ENCODE measurements at regions of chr9 and their contacts with region 1.

Region 1: GRCh38 chr9:121213136-121213806 is 11.6 kb upstream of the RAB14 start:
- DNase-seq: peak; percentile 83
- ATAC-seq: peak; percentile 79
- H3K4me3 Mint-ChIP-seq: no peak overlapping the region
- H3K27ac Mint-ChIP-seq: no peak overlapping the region
- H3K4me1 Mint-ChIP-seq: peaks cover 4% of the 10 kb centered on the region
- H3K27me3 Mint-ChIP-seq: no peaks in the 10 kb centered on the region
- CTCF ChIP-seq: peak; percentile 92

Region 2: DNA sequence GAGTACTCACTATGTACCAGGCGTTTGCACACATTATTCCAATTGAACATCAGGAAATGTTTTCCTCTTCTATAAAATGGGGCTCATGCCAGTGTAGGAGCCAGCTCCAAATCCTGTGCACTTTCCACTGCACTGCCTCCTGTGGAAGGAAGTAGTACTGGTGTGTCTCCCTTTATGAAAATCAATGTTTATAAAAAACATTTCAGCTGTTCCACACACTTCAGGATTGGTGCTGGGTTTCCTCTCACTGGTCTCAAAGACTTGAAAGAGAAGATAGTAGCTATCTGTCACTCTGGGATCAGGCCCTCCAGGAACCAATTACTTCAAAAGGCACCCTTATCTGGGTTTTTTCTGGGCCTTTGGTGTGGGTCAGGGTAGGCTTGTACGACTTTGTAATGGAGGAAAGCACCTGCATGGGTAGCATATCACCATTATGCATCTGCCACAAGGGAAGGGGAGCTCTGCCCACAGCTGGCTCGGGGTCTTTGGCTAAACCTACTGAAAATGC is 44.1 kb before region 1 on chr9:
- CTCF ChIA-PET with region 1: interaction called, 10 read pairs
- POLR2A ChIA-PET with region 1: no interaction called
- intact Hi-C with region 1: no loop called
- DNase-seq: peak; percentile 25
- ATAC-seq: peak; percentile 76
- H3K4me3 Mint-ChIP-seq: no peak overlapping the region
- H3K27ac Mint-ChIP-seq: peak overlapping the region; percentile 56
- H3K4me1 Mint-ChIP-seq: peaks cover 20% of the 10 kb centered on the region
- H3K27me3 Mint-ChIP-seq: no peaks in the 10 kb centered on the region
- CTCF ChIP-seq: peak; percentile 44

Region 3: DNA sequence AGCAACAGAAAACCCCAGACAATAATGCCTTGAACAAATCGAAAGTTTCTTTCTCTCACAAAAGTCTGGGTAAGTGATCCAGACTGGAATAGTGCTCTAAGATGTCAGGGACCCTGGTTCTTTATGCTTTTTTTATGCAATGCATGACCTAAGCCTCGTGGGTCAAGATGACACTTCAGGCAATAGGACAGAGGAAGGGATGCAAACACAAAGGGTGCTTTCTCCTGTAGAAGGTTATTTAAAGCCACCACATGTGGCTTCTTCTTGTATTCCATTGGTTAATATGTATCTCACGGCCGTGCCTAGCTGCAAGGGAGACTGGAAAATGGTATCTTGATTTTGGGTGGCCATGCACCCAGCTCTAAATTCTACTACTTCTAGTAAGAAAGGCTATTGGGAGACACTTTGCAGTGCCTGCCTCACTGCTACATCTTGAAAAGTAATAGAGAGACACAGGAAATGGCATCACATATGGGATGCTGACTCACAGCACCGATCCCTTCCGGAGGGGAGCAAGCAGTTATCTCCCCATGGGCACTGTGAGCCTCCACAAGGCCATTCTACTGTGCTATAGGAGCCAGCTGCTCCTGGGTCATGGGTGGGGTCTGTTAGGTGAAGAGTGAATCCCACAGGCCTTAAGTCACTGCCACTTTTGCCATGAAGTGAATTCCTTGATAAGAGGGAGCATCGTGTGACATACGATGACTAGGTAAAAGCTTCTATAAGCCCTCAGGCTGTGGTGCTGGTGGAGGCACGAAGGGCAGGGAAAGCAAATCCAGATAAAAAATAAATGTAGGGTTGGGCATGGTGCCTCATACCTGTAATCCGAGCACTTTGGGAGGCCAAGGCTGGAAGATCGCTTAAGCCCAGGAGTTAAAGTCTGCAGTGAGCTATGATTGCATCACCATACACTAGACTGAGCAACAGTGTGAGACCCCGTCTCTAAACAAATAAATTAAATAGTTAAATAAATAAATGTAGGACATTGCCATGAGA is 20.9 kb after region 1 on chr9:
- CTCF ChIA-PET with region 1: interaction called, 23 read pairs
- POLR2A ChIA-PET with region 1: no interaction called
- intact Hi-C with region 1: no loop called
- DNase-seq: no peak
- ATAC-seq: no peak
- H3K4me3 Mint-ChIP-seq: no peak overlapping the region
- H3K27ac Mint-ChIP-seq: no peak overlapping the region
- H3K4me1 Mint-ChIP-seq: no peaks in the 10 kb centered on the region
- H3K27me3 Mint-ChIP-seq: no peaks in the 10 kb centered on the region
- CTCF ChIP-seq: no peak

Region 4: GRCh38 chr9:121261107-121261460 is 47.8 kb after region 1 on chr9:
- CTCF ChIA-PET with region 1: interaction called, 11 read pairs
- POLR2A ChIA-PET with region 1: no interaction called
- intact Hi-C with region 1: no loop called
- DNase-seq: no peak
- ATAC-seq: no peak
- H3K4me3 Mint-ChIP-seq: no peak overlapping the region
- H3K27ac Mint-ChIP-seq: no peak overlapping the region
- H3K4me1 Mint-ChIP-seq: no peaks in the 10 kb centered on the region
- H3K27me3 Mint-ChIP-seq: peaks cover 2% of the 10 kb centered on the region
- CTCF ChIP-seq: no peak

Region 5: DNA sequence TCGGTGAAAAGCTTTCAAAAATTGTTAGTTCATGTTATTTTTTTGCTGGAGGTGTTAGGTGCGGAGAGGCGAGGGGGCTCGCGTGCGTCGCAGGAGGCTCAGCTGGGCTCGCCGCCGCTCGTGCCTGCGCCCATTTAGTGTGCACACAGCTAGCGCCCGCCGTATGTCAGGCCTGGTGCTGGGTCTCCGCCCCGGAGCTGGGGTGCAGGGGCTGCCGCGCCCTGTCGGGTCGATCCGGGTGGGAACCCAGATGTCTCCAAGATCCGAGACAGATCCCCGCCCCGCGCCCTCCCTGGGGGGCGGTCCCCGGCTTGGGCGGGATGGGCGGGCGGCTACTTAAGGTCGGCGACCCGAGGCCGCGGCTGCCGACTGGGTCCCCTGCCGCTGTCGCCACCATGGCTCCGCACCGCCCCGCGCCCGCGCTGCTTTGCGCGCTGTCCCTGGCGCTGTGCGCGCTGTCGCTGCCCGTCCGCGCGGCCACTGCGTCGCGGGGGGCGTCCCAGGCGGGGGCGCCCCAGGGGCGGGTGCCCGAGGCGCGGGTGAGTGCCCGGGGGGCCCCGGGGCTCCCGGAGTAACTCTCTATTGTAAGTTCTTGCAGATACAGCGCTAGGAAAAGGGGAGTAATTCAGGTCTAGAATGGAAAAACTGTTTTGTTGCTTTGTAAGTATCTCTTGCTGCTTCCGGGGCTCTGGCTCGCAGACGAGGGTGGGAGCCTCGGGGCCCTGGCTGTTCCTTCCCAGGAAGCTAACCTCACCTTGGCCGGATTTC is 86.4 kb after region 1 on chr9:
- CTCF ChIA-PET with region 1: interaction called, 10 read pairs
- POLR2A ChIA-PET with region 1: interaction called, 5 read pairs
- intact Hi-C with region 1: no loop called
- DNase-seq: peak; percentile 42
- ATAC-seq: peak; percentile 83
- H3K4me3 Mint-ChIP-seq: peak overlapping the region; percentile 66
- H3K27ac Mint-ChIP-seq: no peak overlapping the region
- H3K4me1 Mint-ChIP-seq: peaks cover 16% of the 10 kb centered on the region
- H3K27me3 Mint-ChIP-seq: peaks cover 16% of the 10 kb centered on the region
- CTCF ChIP-seq: no peak

Region 6: GRCh38 chr9:121333950-121334562 is 120.8 kb after region 1 on chr9:
- CTCF ChIA-PET with region 1: no interaction called
- POLR2A ChIA-PET with region 1: no interaction called
- intact Hi-C with region 1: no loop called
- DNase-seq: no peak
- ATAC-seq: no peak
- H3K4me3 Mint-ChIP-seq: no peak overlapping the region
- H3K27ac Mint-ChIP-seq: no peak overlapping the region
- H3K4me1 Mint-ChIP-seq: no peaks in the 10 kb centered on the region
- H3K27me3 Mint-ChIP-seq: no peaks in the 10 kb centered on the region
- CTCF ChIP-seq: no peak

Region 7: GRCh38 chr9:121399883-121400607 is 186.8 kb after region 1 on chr9:
- CTCF ChIA-PET with region 1: interaction called, 47 read pairs
- POLR2A ChIA-PET with region 1: no interaction called
- intact Hi-C with region 1: no loop called
- DNase-seq: no peak
- ATAC-seq: peak; percentile 56
- H3K4me3 Mint-ChIP-seq: no peak overlapping the region
- H3K27ac Mint-ChIP-seq: no peak overlapping the region
- H3K4me1 Mint-ChIP-seq: peaks cover 2% of the 10 kb centered on the region
- H3K27me3 Mint-ChIP-seq: no peaks in the 10 kb centered on the region
- CTCF ChIP-seq: peak; percentile 76